ENCODE measurements at regions of chr2 and their contacts with region 1.

Region 1: DNA sequence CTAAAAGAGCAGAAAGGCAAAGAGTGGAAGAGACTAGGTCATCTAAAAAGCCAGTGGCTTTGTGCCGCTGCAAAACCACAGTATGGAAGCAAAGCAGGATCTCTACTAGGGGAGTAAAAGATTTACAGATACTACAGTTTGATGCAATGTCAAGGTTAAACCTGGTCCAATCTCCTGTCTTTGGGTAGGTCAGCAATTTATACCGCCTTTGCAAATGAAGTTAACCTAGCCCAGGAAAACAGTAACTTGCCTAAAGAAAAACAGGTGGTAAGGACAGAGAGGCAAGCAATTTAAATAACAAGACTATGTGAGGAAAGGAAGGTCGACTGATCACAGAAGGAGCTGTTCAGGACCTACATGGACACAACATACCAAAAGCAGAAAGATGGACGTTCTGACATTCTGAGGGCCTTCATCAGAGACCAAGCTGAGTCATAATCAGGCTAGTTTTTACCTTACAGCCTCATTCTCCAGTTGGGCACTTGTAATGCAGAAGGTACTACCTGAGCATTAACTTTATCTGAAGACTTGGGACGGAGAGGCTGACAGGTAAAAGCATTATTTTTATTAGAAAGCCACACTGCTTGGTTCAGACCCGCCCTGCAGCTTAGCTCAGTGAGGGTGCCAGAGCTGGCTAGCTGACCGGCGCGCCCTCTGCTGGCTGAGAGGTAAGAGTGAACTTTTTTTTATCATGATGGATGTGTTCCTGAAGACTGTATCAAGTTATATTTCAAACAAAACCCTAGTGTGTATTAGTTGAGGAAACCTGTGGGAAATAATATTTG is 15.9 kb downstream of the CDKL4 start:
- DNase-seq: peak; percentile 84
- H3K4me3 ChIP-seq: peak overlapping the region in 1 of 4 donors; percentile 19
- H3K27ac ChIP-seq: no peak overlapping the region
- H3K4me1 ChIP-seq: peaks cover 0 to 16% (median 2%) of the 10 kb centered on the region in 4 donors
- H3K27me3 ChIP-seq: no peaks in the 10 kb centered on the region
- CTCF ChIP-seq: peak; percentile 82 to 91 (median 86)
- EP300 ChIP-seq: no peak
- POLR2A ChIP-seq: no peak

Region 2: GRCh38 chr2:38947240-38948239 is 280.3 kb before region 1 on chr2:
- in situ Hi-C with region 1: loop called in 3 of 4 experiments (anchors 10 kb)
- intact Hi-C with region 1: no loop called
- DNase-seq: peak; percentile 70
- H3K4me3 ChIP-seq: no peak overlapping the region
- H3K27ac ChIP-seq: no peak overlapping the region
- H3K4me1 ChIP-seq: no peaks in the 10 kb centered on the region
- H3K27me3 ChIP-seq: no peaks in the 10 kb centered on the region
- CTCF ChIP-seq: peak; percentile 57 to 65 (median 62)
- EP300 ChIP-seq: no peak
- POLR2A ChIP-seq: no peak

Region 3: DNA sequence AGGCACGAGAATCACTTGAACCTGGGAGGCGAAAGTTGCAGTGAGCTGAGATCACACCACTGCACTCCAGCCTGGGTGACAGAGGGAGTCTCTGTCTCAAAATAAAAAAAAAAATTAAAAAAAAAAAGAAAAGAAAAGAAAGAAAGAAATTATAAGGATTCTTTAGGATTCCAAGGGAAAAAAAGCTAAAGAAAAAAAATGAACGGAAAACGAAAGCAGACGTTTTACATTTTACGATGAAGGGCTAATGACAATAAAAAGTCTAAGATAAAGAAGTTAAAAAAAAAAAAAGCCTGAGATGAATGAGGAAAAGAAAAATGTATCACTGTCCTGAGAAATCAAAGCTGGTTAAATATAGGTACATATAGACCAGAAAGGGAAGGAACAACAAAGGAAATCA is 165.5 kb before region 1 on chr2:
- in situ Hi-C with region 1: loop called (anchors 5 to 10 kb)
- intact Hi-C with region 1: loop called (anchors 2 kb)
- DNase-seq: no peak
- H3K4me3 ChIP-seq: no peak overlapping the region
- H3K27ac ChIP-seq: no peak overlapping the region
- H3K4me1 ChIP-seq: peaks cover 0 to 27% (median 0%) of the 10 kb centered on the region in 4 donors
- H3K27me3 ChIP-seq: no peaks in the 10 kb centered on the region
- CTCF ChIP-seq: no peak
- EP300 ChIP-seq: no peak
- POLR2A ChIP-seq: no peak

Region 4: GRCh38 chr2:39069136-39069515 is 158.7 kb before region 1 on chr2:
- in situ Hi-C with region 1: loop called (anchors 5 to 10 kb)
- intact Hi-C with region 1: no loop called
- DNase-seq: no peak
- H3K4me3 ChIP-seq: no peak overlapping the region
- H3K27ac ChIP-seq: no peak overlapping the region
- H3K4me1 ChIP-seq: peaks cover 0 to 16% (median 0%) of the 10 kb centered on the region in 4 donors
- H3K27me3 ChIP-seq: no peaks in the 10 kb centered on the region
- CTCF ChIP-seq: no peak
- EP300 ChIP-seq: no peak
- POLR2A ChIP-seq: no peak

Region 5: DNA sequence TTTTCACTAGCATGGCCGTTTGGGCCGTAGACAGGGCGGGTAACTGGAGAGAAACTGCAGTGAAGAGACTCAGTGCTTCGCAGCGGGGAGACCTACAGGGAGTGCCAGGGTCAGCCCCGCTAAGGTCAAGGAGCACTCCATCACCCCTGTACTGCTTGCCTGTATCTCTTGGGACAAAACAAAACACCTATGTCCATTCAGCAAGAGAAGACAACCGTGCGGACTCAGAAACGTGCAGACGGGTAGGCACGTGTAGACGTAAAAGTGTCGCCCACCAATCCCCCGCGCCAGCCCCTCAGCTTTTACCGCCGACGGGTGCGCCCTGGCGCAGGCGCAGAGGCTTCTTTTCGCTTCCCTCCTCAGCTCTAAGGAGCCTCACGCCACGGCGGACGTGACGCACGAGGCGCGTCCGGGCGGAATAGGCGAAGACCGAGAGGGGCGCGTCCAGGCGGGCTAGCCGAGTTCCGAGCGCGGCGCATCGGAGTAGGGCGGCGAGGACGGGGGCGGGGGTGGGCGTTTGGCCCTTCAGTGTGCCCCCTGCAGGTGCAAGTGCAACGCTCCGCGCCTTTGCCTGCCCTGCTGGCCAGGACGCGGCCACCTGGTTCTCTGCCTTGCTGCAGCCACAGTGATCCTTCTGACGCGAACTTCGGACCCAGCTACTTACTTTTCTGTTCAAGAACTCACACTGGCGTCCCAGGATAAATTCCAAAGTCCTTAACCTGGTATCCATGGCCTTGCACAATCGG is 103.6 kb before region 1 on chr2:
- in situ Hi-C with region 1: loop called in 1 of 4 experiments (anchors 10 kb)
- intact Hi-C with region 1: loop called (anchors 10 kb)
- DNase-seq: peak; percentile 96
- H3K4me3 ChIP-seq: peak overlapping the region; percentile 55 to 79 (median 61)
- H3K27ac ChIP-seq: peak overlapping the region; percentile 93 to 97 (median 96)
- H3K4me1 ChIP-seq: peaks cover 18 to 45% (median 19%) of the 10 kb centered on the region in 4 donors
- H3K27me3 ChIP-seq: no peaks in the 10 kb centered on the region
- CTCF ChIP-seq: peak; percentile 33 to 56 (median 41)
- EP300 ChIP-seq: no peak
- POLR2A ChIP-seq: peak; percentile 85

Region 6: GRCh38 chr2:39203382-39203781 is 24.4 kb before region 1 on chr2:
- in situ Hi-C with region 1: no loop called
- intact Hi-C with region 1: no loop called
- DNase-seq: no peak
- H3K4me3 ChIP-seq: no peak overlapping the region
- H3K27ac ChIP-seq: no peak overlapping the region
- H3K4me1 ChIP-seq: no peaks in the 10 kb centered on the region
- H3K27me3 ChIP-seq: no peaks in the 10 kb centered on the region
- CTCF ChIP-seq: no peak
- EP300 ChIP-seq: no peak
- POLR2A ChIP-seq: no peak